ENCODE measurements at regions of chr3 and their contacts with region 1.

Region 1: DNA sequence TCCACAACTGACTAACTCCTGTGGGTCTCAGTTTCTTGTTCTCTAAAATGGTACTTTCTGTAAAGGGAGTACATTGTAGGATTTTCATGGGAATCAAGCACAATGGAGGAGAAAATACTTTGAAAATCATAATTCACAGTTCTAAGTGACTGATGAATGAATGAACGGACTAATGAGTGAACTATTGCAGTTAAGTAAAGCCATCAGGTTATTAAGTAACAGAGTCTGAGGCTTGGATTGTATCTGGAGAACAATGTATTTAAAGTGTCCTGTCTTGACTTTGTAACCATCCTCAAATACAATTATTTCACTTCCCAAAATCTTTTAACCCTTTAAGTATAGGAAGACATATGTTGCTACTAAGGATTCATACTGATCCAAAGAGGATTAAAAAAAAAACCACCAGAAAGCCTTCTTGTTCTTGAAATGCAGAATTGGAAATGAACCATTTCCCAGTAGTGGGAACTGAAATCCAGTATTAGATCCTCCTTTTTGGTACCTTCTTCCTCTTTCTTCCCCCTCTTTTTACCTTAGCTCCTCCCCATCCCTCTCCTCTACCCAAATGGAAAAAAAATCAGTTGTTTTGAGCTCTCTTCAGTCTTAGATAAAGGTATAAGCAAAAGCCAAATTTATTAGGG is 13.2 kb upstream of the BCL6 start:
- H3K4me3 Mint-ChIP-seq: no peak overlapping the region
- H3K27ac Mint-ChIP-seq: peak overlapping the region; percentile 78
- H3K4me1 Mint-ChIP-seq: peaks cover 68% of the 10 kb centered on the region
- H3K27me3 Mint-ChIP-seq: no peaks in the 10 kb centered on the region

Region 2: DNA sequence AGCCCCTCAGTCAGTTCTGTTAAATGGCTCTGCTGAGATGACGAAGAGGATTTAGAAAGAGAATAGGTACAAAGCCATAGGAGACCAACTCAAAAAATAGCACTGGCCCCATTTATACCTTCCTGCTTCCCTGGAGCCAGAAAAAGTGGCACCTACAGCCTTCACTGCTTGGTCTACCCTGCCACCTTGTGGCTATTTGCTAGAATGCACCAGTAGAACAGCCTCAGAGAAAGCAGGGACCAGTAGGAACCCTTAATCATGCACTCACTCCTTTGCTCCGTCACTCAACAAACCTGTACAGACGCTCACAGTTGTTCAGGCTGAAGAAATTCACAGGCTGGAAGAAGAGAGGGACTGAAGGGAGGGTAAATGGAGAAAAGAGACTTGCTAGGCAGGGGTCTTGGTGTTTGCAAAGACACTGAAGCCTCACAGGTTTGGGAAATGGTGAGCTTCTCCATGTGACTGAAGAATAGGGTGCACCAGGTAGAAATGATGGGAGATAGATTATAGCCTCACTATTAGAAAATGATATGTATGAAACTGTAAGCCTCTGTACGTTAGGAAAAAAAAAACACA is 43.9 kb before region 1 on chr3:
- intact Hi-C with region 1: no loop called
- H3K4me3 Mint-ChIP-seq: no peak overlapping the region
- H3K27ac Mint-ChIP-seq: no peak overlapping the region
- H3K4me1 Mint-ChIP-seq: peaks cover 14% of the 10 kb centered on the region
- H3K27me3 Mint-ChIP-seq: no peaks in the 10 kb centered on the region

Region 3: GRCh38 chr3:187773233-187774184 is 15.1 kb after region 1 on chr3:
- intact Hi-C with region 1: loop called (anchors 2 kb)
- H3K4me3 Mint-ChIP-seq: peak overlapping the region; percentile 76
- H3K27ac Mint-ChIP-seq: peak overlapping the region; percentile 94
- H3K4me1 Mint-ChIP-seq: peaks cover 65% of the 10 kb centered on the region
- H3K27me3 Mint-ChIP-seq: no peaks in the 10 kb centered on the region

Region 4: DNA sequence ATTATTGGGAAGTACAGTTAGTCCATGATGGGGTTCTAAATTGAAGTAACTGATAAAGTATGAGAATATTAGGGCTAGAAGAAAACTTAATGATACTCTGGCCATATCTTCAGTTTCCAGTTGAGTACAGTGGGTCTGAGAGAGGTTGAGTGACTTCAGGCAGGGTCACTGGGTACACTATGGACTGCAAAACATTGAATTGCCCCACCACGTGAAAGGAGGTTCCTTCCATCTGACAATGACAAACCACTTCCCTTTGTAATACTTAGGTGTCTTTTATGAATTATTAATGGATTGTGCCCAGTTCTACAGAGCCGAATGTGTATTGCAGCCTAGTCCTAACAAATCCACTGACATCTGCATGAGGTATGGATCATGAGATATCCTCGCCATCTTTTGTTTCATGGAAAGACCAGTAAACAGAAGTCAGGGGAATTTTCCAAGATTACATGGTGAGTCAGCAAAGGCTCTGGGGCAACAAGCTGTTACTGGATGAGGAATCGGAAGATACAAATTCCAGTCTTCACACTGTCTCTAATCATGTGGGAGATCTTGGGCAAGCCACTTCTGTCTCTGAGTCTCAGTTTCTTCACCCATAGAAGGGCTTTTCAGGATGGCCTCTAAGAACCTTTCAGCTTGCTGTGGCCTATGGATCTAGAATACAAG is 53.3 kb after region 1 on chr3:
- intact Hi-C with region 1: no loop called
- H3K4me3 Mint-ChIP-seq: no peak overlapping the region
- H3K27ac Mint-ChIP-seq: no peak overlapping the region
- H3K4me1 Mint-ChIP-seq: peaks cover 15% of the 10 kb centered on the region
- H3K27me3 Mint-ChIP-seq: peaks cover 8% of the 10 kb centered on the region

Measured in dendritic cell treated with granulocyte-macrophage colony-stimulating factor and Interleukin-4, amounts not matched to agents 40 ng/mL and 50 ng/mL, for 4 days (primary cell).